Caco-2 (cell line): ENCODE measurements at regions of chr12 and their contacts with region 1.

Region 1: DNA sequence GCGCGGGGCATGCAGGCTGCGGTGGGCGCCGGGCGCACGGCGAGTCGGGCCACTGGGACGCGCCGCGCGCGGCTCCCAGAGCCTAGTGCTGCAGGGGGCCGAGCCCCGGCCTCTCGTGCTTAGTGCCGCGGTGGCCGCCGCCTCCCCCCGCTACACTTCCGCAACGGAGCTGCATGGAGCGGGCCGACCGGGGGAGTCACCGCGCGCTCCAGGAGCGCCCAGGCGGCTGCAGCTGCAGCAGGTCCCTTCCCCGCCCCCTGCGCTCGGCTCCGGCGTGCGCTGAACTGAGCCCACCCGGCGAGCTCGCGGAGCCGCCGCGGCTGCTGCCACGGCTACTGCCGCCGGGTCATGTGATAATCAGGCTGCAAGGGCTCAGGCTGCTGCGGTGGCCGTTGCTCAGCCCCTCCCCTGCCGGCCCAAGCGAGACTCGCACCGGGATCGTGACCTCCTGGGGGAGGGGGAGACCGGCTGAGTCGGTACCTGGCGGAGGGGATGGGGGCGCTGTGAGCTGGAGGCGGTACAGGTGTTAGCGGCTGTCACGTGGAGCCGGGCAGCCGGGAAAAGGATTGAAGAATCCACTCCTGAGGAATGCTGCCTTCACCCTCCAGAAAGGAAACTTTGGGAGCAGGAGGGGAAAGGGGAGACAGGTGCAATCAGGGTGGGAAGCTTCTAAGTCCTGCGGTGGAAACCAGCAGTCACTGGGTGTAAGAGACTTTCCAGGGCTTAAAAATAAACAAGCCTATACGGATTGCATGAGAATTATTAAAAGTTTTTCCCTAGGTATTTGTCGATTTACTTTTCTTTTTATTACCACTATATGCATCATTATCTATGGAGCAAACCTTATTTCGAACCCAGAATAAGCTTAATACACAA is at the start of gene PPM1H:
- DNase-seq: peak; percentile 97 to 98
- H3K4me3 ChIP-seq: peak within 1 kb of the TSS; percentile 96
- H3K4me3 Mint-ChIP-seq: peak within 1 kb of the TSS; percentile 77
- H3K27ac Mint-ChIP-seq: peak within 1 kb of the TSS; percentile 89
- H3K4me1 ChIP-seq: peaks cover 25% of the 10 kb centered on the region
- H3K4me1 Mint-ChIP-seq: peaks cover 15% of the 10 kb centered on the region
- H3K27me3 ChIP-seq: no peaks in the 10 kb centered on the region
- H3K27me3 Mint-ChIP-seq: no peaks in the 10 kb centered on the region
- CTCF ChIP-seq: peak; percentile 90 to 92
- total RNA-seq, gene PPM1H: 145 and 151 TPM in 2 replicates

Region 2: GRCh38 chr12:62799126-62799736 is 135.8 kb before region 1 on chr12:
- CTCF ChIA-PET with region 1: no interaction called
- POLR2A ChIA-PET with region 1: no interaction called
- intact Hi-C with region 1: loop called (anchors 5 kb)
- DNase-seq: peak; percentile 73 to 78
- H3K4me3 ChIP-seq: no peak overlapping the region
- H3K4me3 Mint-ChIP-seq: no peak overlapping the region
- H3K27ac Mint-ChIP-seq: peak overlapping the region; percentile 80
- H3K4me1 ChIP-seq: peaks cover 64% of the 10 kb centered on the region
- H3K4me1 Mint-ChIP-seq: peaks cover 37% of the 10 kb centered on the region
- H3K27me3 ChIP-seq: no peaks in the 10 kb centered on the region
- H3K27me3 Mint-ChIP-seq: no peaks in the 10 kb centered on the region
- CTCF ChIP-seq: peak; percentile 79 to 86

Region 3: DNA sequence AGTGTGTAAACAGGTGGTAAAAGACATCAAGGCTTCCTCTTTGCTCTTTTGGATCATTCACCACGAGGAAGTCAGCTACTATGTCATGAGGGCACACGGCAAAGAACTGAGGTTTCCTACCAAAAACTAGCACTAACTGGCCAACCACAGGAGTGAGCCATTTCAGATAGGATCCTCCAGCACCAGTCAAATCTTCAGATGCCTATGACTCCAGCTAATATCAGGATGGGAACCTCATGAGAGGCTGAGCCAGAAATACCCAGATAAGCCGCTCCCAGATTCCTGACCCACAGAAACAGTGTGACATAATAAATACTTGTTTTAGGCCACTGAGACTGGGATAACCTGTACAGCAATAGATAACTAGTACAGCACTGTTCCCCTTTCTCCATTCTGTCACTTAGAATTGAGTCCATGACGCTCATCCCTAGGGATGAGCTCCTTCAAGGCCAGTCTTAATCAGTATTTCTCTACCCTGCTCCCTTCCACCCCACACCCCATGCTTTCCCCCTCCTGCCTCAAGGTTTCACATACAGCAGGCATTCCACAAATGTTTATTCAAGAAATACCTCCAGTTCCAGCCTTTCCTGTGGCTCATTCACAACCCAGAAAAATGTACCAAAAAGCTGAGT is 68.5 kb before region 1 on chr12:
- CTCF ChIA-PET with region 1: no interaction called
- POLR2A ChIA-PET with region 1: interaction called, 3 read pairs
- intact Hi-C with region 1: loop called (anchors 1 kb)
- DNase-seq: peak; percentile 76 to 86
- H3K4me3 ChIP-seq: no peak overlapping the region
- H3K4me3 Mint-ChIP-seq: peak overlapping the region; percentile 56
- H3K27ac Mint-ChIP-seq: peak overlapping the region; percentile 89
- H3K4me1 ChIP-seq: peaks cover 91% of the 10 kb centered on the region
- H3K4me1 Mint-ChIP-seq: peaks cover 46% of the 10 kb centered on the region
- H3K27me3 ChIP-seq: no peaks in the 10 kb centered on the region
- H3K27me3 Mint-ChIP-seq: no peaks in the 10 kb centered on the region
- CTCF ChIP-seq: no peak

Region 4: DNA sequence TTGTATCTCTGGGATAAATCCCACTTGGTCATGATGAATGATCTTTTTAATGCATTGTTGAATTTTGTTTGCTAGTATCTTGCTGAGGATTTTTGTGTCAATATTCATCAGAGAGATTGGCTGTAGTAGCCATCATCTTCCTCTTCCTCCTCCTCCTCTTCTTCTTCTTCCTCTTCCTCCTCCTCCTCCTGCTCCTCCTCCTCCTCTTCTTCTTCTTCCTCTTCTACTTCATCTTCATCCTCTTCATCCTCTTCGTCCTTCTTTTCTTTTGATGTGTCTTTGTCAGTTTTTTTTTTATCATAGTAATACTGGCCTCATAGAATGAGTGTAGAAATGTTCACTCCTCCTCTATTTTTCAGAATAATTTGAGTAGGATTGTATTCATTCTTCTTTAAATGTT is 15.3 kb after region 1 on chr12:
- CTCF ChIA-PET with region 1: no interaction called
- POLR2A ChIA-PET with region 1: no interaction called
- intact Hi-C with region 1: no loop called
- DNase-seq: no peak
- H3K4me3 ChIP-seq: no peak overlapping the region
- H3K4me3 Mint-ChIP-seq: no peak overlapping the region
- H3K27ac Mint-ChIP-seq: no peak overlapping the region
- H3K4me1 ChIP-seq: no peaks in the 10 kb centered on the region
- H3K4me1 Mint-ChIP-seq: peaks cover under 1% of the 10 kb centered on the region
- H3K27me3 ChIP-seq: no peaks in the 10 kb centered on the region
- H3K27me3 Mint-ChIP-seq: no peaks in the 10 kb centered on the region
- CTCF ChIP-seq: no peak

Region 5: DNA sequence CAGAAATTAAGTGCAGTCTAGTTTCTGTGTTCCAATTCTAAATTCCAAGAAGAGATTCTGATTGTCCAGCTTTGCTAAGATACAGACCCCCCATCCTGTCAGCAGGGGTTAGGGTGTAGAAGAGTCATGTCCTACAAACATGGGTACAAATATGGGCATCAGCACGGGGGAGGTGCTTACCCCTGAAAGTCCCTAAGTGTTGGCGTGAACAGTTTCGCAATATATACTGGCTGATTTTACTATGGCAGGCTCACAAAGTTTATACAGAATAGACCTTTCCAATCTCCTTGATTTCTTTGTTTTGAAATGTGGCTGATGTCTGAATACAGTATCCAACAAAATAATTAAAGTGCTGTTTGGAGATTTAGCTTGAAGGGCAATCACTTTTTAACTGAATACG is 71.5 kb after region 1 on chr12:
- CTCF ChIA-PET with region 1: no interaction called
- POLR2A ChIA-PET with region 1: no interaction called
- intact Hi-C with region 1: loop called (anchors 2 kb)
- DNase-seq: peak; percentile 48 to 55
- H3K4me3 ChIP-seq: no peak overlapping the region
- H3K4me3 Mint-ChIP-seq: peak overlapping the region; percentile 4
- H3K27ac Mint-ChIP-seq: peak overlapping the region; percentile 87
- H3K4me1 ChIP-seq: peaks cover 59% of the 10 kb centered on the region
- H3K4me1 Mint-ChIP-seq: peaks cover 34% of the 10 kb centered on the region
- H3K27me3 ChIP-seq: no peaks in the 10 kb centered on the region
- H3K27me3 Mint-ChIP-seq: no peaks in the 10 kb centered on the region
- CTCF ChIP-seq: no peak

Region 6: GRCh38 chr12:63068857-63069442 is 133.9 kb after region 1 on chr12:
- CTCF ChIA-PET with region 1: interaction called, 24 read pairs
- POLR2A ChIA-PET with region 1: no interaction called
- intact Hi-C with region 1: loop called (anchors 1 kb)
- DNase-seq: peak in 1 of 2 experiments; percentile 39
- H3K4me3 ChIP-seq: no peak overlapping the region
- H3K4me3 Mint-ChIP-seq: no peak overlapping the region
- H3K27ac Mint-ChIP-seq: no peak overlapping the region
- H3K4me1 ChIP-seq: peaks cover 26% of the 10 kb centered on the region
- H3K4me1 Mint-ChIP-seq: peaks cover 33% of the 10 kb centered on the region
- H3K27me3 ChIP-seq: no peaks in the 10 kb centered on the region
- H3K27me3 Mint-ChIP-seq: no peaks in the 10 kb centered on the region
- CTCF ChIP-seq: peak; percentile 61 to 64

Region 7: DNA sequence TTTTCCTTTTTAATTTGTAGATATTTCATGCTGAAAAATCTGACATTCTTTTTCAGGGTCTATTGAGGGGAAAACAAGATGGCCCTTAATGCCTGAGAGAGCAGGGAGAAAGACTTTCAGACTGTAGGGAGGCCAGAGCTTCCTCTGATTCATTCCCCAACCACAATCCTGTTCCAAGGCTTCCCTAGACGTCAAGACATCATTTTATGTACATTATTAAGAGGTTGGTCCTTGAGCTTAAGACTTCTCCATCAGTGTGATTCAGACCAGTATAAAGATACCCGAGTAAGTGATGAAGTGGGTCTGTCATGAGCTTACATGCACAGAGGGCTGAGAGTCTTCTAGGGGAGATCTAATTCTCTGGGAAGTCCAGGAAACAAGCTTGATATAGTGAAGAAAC is 158.7 kb after region 1 on chr12:
- CTCF ChIA-PET with region 1: no interaction called
- POLR2A ChIA-PET with region 1: no interaction called
- intact Hi-C with region 1: no loop called
- DNase-seq: no peak
- H3K4me3 ChIP-seq: no peak overlapping the region
- H3K4me3 Mint-ChIP-seq: no peak overlapping the region
- H3K27ac Mint-ChIP-seq: no peak overlapping the region
- H3K4me1 ChIP-seq: no peaks in the 10 kb centered on the region; the same call in none of the 2 replicates
- H3K4me1 Mint-ChIP-seq: peaks cover 13% of the 10 kb centered on the region
- H3K27me3 ChIP-seq: no peaks in the 10 kb centered on the region
- H3K27me3 Mint-ChIP-seq: no peaks in the 10 kb centered on the region
- CTCF ChIP-seq: no peak